Naive thymus-derived CD4-positive, alpha-beta T cell (primary cell): ENCODE measurements at regions of chr2 and their contacts with region 1.

Region 1: GRCh38 chr2:182715896-182716668 is at the start of gene DNAJC10:
- DNase-seq: peak; percentile 79 to 91 (median 86)
- ATAC-seq: peak; percentile 91
- H3K4me3 ChIP-seq: peak within 1 kb of the TSS; percentile 86
- H3K4me3 Mint-ChIP-seq: no peak within 1 kb of the TSS
- H3K27ac ChIP-seq: peak within 1 kb of the TSS; percentile 73
- H3K27ac Mint-ChIP-seq: no peak within 1 kb of the TSS
- H3K4me1 ChIP-seq: peaks cover 9 to 16% of the 10 kb centered on the region in 2 donors
- H3K4me1 Mint-ChIP-seq: peaks cover 0 to 13% (median 9%) of the 10 kb centered on the region in 7 donors
- H3K27me3 ChIP-seq: no peaks in the 10 kb centered on the region
- H3K27me3 Mint-ChIP-seq: peaks cover 0 to 11% (median under 1%) of the 10 kb centered on the region in 5 donors
- total RNA-seq, gene DNAJC10: 35.9 to 70.4 (median 55.6) TPM

Region 2: GRCh38 chr2:182650704-182651103 is 65.4 kb before region 1 on chr2:
- CTCF ChIA-PET with region 1: no interaction called
- POLR2A ChIA-PET with region 1: no interaction called
- intact Hi-C with region 1: loop called in 1 of 2 experiments (anchors 1 kb)
- DNase-seq: peak in 1 of 9 donors; percentile 15
- ATAC-seq: no peak
- H3K4me3 ChIP-seq: no peak overlapping the region
- H3K4me3 Mint-ChIP-seq: no peak overlapping the region
- H3K27ac ChIP-seq: no peak overlapping the region
- H3K27ac Mint-ChIP-seq: peak overlapping the region in 1 of 9 donors; percentile 37
- H3K4me1 ChIP-seq: no peaks in the 10 kb centered on the region
- H3K4me1 Mint-ChIP-seq: peaks cover 0 to 21% (median 9%) of the 10 kb centered on the region in 7 donors
- H3K27me3 ChIP-seq: no peaks in the 10 kb centered on the region
- H3K27me3 Mint-ChIP-seq: peaks cover 0 to 7% (median 0%) of the 10 kb centered on the region in 5 donors

Region 3: GRCh38 chr2:182705761-182706160 is 10.3 kb before region 1 on chr2:
- CTCF ChIA-PET with region 1: no interaction called
- POLR2A ChIA-PET with region 1: no interaction called
- intact Hi-C with region 1: no loop called
- DNase-seq: no peak
- ATAC-seq: no peak
- H3K4me3 ChIP-seq: no peak overlapping the region
- H3K4me3 Mint-ChIP-seq: no peak overlapping the region
- H3K27ac ChIP-seq: no peak overlapping the region
- H3K27ac Mint-ChIP-seq: no peak overlapping the region
- H3K4me1 ChIP-seq: no peaks in the 10 kb centered on the region
- H3K4me1 Mint-ChIP-seq: no peaks in the 10 kb centered on the region
- H3K27me3 ChIP-seq: peaks cover 0 to 6% of the 10 kb centered on the region in 2 donors
- H3K27me3 Mint-ChIP-seq: peaks cover 15 to 55% (median 34%) of the 10 kb centered on the region in 5 donors

Region 4: DNA sequence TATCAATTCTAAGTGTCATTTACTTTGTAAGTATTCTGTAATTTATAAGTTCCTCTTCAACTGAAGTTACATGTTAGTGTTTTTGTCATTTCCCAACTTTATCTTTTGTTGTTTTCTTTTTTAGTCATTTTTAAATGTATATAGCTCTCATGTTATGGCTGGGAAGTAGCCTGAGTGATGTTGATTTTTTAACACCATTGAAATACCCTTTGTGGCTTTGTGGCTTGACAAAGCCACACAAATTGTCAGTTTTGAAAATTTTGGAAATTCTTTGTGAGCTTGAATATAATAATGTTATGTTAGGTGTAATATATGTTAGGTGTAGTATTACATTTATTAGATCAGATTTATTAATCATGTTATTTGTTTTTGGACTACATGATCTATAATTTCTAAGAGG is 16.7 kb after region 1 on chr2:
- CTCF ChIA-PET with region 1: no interaction called
- POLR2A ChIA-PET with region 1: no interaction called
- intact Hi-C with region 1: loop called in 1 of 2 experiments (anchors 2 kb)
- DNase-seq: no peak
- ATAC-seq: no peak
- H3K4me3 ChIP-seq: no peak overlapping the region
- H3K4me3 Mint-ChIP-seq: no peak overlapping the region
- H3K27ac ChIP-seq: no peak overlapping the region
- H3K27ac Mint-ChIP-seq: no peak overlapping the region
- H3K4me1 ChIP-seq: no peaks in the 10 kb centered on the region
- H3K4me1 Mint-ChIP-seq: peaks cover 0 to 6% (median 0%) of the 10 kb centered on the region in 7 donors
- H3K27me3 ChIP-seq: no peaks in the 10 kb centered on the region
- H3K27me3 Mint-ChIP-seq: no peaks in the 10 kb centered on the region

Region 5: GRCh38 chr2:183038341-183039300 is 322.5 kb after region 1 on chr2 and contains the start of gene NCKAP1:
- CTCF ChIA-PET with region 1: no interaction called
- POLR2A ChIA-PET with region 1: interaction called, 5 read pairs
- intact Hi-C with region 1: loop called (anchors 1 kb)
- DNase-seq: peak; percentile 67 to 94 (median 80)
- ATAC-seq: peak; percentile 92
- H3K4me3 ChIP-seq: peak within 1 kb of the TSS; percentile 77
- H3K4me3 Mint-ChIP-seq: peak within 1 kb of the TSS; percentile 84 to 95 (median 86)
- H3K27ac ChIP-seq: no peak within 1 kb of the TSS
- H3K27ac Mint-ChIP-seq: peak within 1 kb of the TSS in 7 of 9 donors; percentile 55 to 85 (median 69)
- H3K4me1 ChIP-seq: peaks cover 26% of the 10 kb centered on the region in 2 donors
- H3K4me1 Mint-ChIP-seq: peaks cover 24 to 37% (median 34%) of the 10 kb centered on the region in 7 donors
- H3K27me3 ChIP-seq: peaks cover 3 to 28% of the 10 kb centered on the region in 2 donors
- H3K27me3 Mint-ChIP-seq: peaks cover 42 to 80% (median 63%) of the 10 kb centered on the region in 5 donors
- total RNA-seq, gene NCKAP1: 2.4 to 4.1 (median 2.7) TPM